HEK293 (cell line): ENCODE measurements at regions of chr3 and their contacts with region 1.

Region 1: DNA sequence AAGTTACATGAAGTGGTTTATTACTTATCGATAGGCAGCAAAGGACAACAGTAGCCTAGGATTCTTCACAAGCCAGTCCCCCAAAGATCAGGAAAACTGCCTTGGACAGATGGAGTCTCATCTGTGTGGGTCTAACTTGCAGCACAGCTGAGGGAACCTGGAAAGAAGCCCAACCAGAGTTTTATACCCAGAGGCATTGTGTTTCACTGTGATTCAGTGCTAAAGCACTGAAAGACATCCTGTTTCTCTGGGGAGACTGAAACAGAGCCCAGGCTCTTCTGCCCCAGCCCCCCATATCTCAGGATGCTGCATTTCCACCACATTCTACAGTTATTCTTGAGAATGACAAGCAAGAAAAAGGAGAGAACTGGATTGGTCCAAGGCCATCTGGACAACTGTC is 48.2 kb upstream of the PYDC2 start:
- H3K4me3 ChIP-seq: no peak overlapping the region
- H3K27ac ChIP-seq: no peak overlapping the region
- H3K4me1 ChIP-seq: no peaks in the 10 kb centered on the region
- CTCF ChIP-seq: no peak

Region 2: GRCh38 chr3:191369616-191370010 is 43.1 kb before region 1 on chr3:
- CTCF ChIA-PET with region 1: no interaction called
- POLR2A ChIA-PET with region 1: no interaction called
- H3K4me3 ChIP-seq: no peak overlapping the region
- H3K27ac ChIP-seq: no peak overlapping the region
- H3K4me1 ChIP-seq: peaks cover 5% of the 10 kb centered on the region; the same call in 1 of the 2 replicates
- CTCF ChIP-seq: no peak

Region 3: DNA sequence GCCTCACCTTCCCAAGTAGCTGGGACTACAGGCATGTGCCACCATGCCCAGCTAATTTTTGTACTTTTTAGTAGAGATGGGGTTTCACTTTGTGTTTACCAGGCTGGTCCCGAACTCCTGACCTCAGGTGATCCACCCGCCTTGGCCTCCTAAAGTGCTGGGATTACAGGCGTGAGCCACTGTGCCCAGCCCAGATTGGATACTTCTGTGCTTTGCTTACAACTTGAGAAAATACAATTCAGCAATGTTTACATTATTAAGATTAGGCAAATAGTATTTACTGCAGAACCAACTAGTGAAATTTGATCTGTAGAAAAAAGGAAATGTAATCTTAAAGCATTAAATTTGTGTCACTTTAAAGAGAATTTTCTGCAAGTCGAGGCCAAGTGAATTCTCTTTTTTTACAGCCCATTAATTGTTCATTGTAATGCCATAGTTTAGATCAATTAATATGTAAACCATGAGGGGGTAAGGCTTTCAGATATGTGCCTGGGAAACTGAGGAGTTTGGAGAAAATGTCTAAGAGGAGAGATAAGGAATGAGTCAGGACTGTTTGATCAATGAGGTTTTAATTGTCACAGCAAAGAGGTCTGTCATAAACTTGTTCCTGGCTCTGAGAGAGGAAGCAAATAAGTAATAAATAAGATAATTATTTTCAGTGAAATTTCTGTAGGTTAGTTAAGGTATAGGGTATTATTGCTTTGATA is 63.5 kb after region 1 on chr3:
- CTCF ChIA-PET with region 1: interaction called, 10 read pairs
- POLR2A ChIA-PET with region 1: no interaction called
- H3K4me3 ChIP-seq: no peak overlapping the region
- H3K27ac ChIP-seq: no peak overlapping the region
- H3K4me1 ChIP-seq: no peaks in the 10 kb centered on the region
- CTCF ChIP-seq: no peak